Mammary epithelial cell (primary cell): ENCODE measurements at regions of chr4 and their contacts with region 1.

Region 1: GRCh38 chr4:122764821-122765215 is 32.3 kb downstream of the BBS12 start:
- DNase-seq: peak; percentile 67
- H3K4me3 ChIP-seq: no peak overlapping the region
- H3K27ac ChIP-seq: peak overlapping the region; percentile 95
- H3K4me1 ChIP-seq: peaks cover 17% of the 10 kb centered on the region
- H3K27me3 ChIP-seq: no peaks in the 10 kb centered on the region
- CTCF ChIP-seq: no peak

Region 2: DNA sequence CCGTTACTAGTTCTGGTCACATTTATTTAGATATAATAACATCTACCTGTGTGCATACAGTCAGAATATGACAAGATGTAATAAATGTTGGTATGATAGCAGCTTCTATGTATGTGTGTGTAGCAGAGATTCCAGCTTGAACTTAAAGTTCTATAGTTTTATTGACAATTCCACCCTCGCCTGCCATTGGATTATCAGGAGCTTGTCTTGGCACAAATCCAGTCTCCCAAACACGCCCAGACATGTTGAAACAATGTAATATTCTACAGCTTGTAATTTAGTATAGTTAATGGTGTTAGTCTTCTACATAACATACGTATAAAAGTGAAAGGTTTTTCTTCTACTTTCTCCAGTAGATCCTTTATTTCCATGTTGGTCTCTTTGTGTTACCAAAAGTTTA is 12.1 kb after region 1 on chr4:
- CTCF ChIA-PET with region 1: no interaction called
- dilution Hi-C with region 1: no loop called
- in situ Hi-C with region 1: no loop called
- intact Hi-C with region 1: loop called (anchors 1 kb)
- DNase-seq: peak; percentile 38
- H3K4me3 ChIP-seq: no peak overlapping the region
- H3K27ac ChIP-seq: no peak overlapping the region
- H3K4me1 ChIP-seq: peaks cover 35% of the 10 kb centered on the region
- H3K27me3 ChIP-seq: no peaks in the 10 kb centered on the region
- CTCF ChIP-seq: no peak

Region 3: DNA sequence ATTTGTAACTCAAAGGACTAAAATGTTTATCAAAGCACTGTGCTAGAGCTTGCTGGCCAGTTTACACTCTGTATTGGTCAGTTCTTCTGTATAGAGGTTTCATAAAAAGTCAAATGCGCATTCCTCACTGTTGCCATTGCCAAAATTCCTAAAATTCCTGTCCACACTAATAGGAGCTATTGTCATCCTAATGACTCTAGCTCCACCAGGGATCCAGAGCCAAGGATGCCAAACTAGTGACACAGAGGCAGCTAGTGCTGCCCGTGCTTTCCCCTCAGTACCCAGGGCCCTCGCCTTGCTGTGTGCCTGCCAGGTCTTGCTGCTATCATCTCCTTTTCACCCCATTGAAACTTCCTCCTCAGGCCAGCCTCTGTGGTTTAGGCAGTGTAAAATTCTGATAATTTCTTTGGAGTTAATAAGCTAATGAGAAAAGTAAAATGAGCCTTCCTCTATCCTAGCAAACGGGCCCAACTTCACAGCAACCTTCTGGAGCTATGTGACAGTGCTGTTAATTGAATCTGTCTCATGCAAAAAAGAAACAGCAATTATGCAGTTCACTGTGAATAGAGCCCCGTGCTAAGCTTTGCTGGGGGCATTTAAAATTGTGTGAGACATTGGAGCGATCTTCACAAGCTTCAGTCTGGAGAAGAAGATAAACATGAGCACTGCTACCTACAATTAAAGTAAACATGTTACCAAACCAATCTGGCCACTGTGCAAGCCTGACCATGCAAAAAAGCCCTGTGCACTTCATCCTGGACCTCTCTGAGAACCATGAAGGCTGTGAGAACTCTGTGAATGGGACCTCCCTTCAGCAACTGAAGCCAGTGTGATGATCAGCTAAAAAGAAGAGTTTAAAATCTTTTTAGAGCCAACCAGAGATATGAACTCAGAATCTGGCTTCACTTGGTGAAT is 18.7 kb after region 1 on chr4:
- CTCF ChIA-PET with region 1: no interaction called
- dilution Hi-C with region 1: no loop called
- in situ Hi-C with region 1: no loop called
- intact Hi-C with region 1: loop called (anchors 1 kb)
- DNase-seq: peak; percentile 87
- H3K4me3 ChIP-seq: no peak overlapping the region
- H3K27ac ChIP-seq: peak overlapping the region; percentile 49
- H3K4me1 ChIP-seq: peaks cover 34% of the 10 kb centered on the region
- H3K27me3 ChIP-seq: no peaks in the 10 kb centered on the region
- CTCF ChIP-seq: no peak